ENCODE measurements at regions of chr18 and their contacts with region 1.

Region 1: GRCh38 chr18:13289481-13290205 is 71.1 kb downstream of the LDLRAD4 start:
- DNase-seq: no peak
- H3K4me3 Mint-ChIP-seq: no peak overlapping the region
- H3K27ac Mint-ChIP-seq: no peak overlapping the region
- H3K4me1 Mint-ChIP-seq: peaks cover 24% of the 10 kb centered on the region
- H3K27me3 Mint-ChIP-seq: no peaks in the 10 kb centered on the region

Region 2: GRCh38 chr18:13279181-13280069 is 10.2 kb before region 1 on chr18:
- CTCF ChIA-PET with region 1: interaction called, 3 read pairs
- intact Hi-C with region 1: loop called (anchors 1 kb)
- DNase-seq: peak; percentile 51
- H3K4me3 Mint-ChIP-seq: peak overlapping the region; percentile 63
- H3K27ac Mint-ChIP-seq: peak overlapping the region; percentile 63
- H3K4me1 Mint-ChIP-seq: peaks cover 66% of the 10 kb centered on the region
- H3K27me3 Mint-ChIP-seq: no peaks in the 10 kb centered on the region

Measured in activated naive CD4-positive, alpha-beta T cell treated with anti-CD3 and anti-CD28 coated beads for 36 hours (primary cell).